Heart right ventricle (tissue), 16 donors: ENCODE measurements at regions of chr19 and their contacts with region 1.

Region 1: GRCh38 chr19:860481-861101 is 1.1 kb downstream of the CFD start:
- DNase-seq: peak in 1 of 2 donors; percentile 75
- ATAC-seq: peak; percentile 46 to 67 (median 54)
- H3K4me3 ChIP-seq: peak overlapping the region; percentile 16 to 57 (median 46)
- H3K27ac ChIP-seq: peak overlapping the region in 8 of 10 donors; percentile 34 to 86 (median 78)
- H3K4me1 ChIP-seq: peaks cover 0 to 46% (median 10%) of the 10 kb centered on the region in 9 donors
- H3K27me3 ChIP-seq: peaks cover 0 to 51% (median 37%) of the 10 kb centered on the region in 7 donors
- CTCF ChIP-seq: peak in 5 of 9 donors; percentile 19 to 43 (median 25)

Region 2: GRCh38 chr19:814258-815078 is 46.1 kb before region 1 on chr19:
- intact Hi-C with region 1: no loop called
- DNase-seq: peak in 1 of 2 donors; percentile 8
- ATAC-seq: peak in 3 of 8 donors; percentile 7 to 33 (median 10)
- H3K4me3 ChIP-seq: no peak overlapping the region
- H3K27ac ChIP-seq: no peak overlapping the region
- H3K4me1 ChIP-seq: no peaks in the 10 kb centered on the region
- H3K27me3 ChIP-seq: no peaks in the 10 kb centered on the region
- CTCF ChIP-seq: no peak

Region 3: GRCh38 chr19:913080-913748 is 52.6 kb after region 1 on chr19 and contains the start of gene R3HDM4:
- intact Hi-C with region 1: loop called in 6 of 10 experiments (anchors 2 to 5 kb)
- DNase-seq: peak; percentile 82 to 85
- ATAC-seq: peak; percentile 88 to 95 (median 92)
- H3K4me3 ChIP-seq: peak within 1 kb of the TSS; percentile 70 to 99 (median 88)
- H3K27ac ChIP-seq: peak within 1 kb of the TSS; percentile 70 to 99 (median 92)
- H3K4me1 ChIP-seq: peaks cover 13 to 59% (median 22%) of the 10 kb centered on the region in 9 donors
- H3K27me3 ChIP-seq: peaks cover 11 to 24% (median 22%) of the 10 kb centered on the region in 7 donors
- CTCF ChIP-seq: no peak
- total RNA-seq, gene R3HDM4: 16.3 to 30.6 (median 19.9) TPM

Region 4: GRCh38 chr19:920051-920864 is 59.7 kb after region 1 on chr19:
- intact Hi-C with region 1: loop called in 9 of 10 experiments (anchors 2 to 5 kb)
- DNase-seq: no peak
- ATAC-seq: peak in 2 of 8 donors; percentile 1 to 4
- H3K4me3 ChIP-seq: peak overlapping the region in 7 of 10 donors; percentile 5 to 48 (median 17)
- H3K27ac ChIP-seq: peak overlapping the region in 1 of 10 donors; percentile 26
- H3K4me1 ChIP-seq: peaks cover 13 to 68% (median 40%) of the 10 kb centered on the region in 9 donors
- H3K27me3 ChIP-seq: peaks cover 30 to 57% (median 55%) of the 10 kb centered on the region in 7 donors
- CTCF ChIP-seq: no peak

Region 5: DNA sequence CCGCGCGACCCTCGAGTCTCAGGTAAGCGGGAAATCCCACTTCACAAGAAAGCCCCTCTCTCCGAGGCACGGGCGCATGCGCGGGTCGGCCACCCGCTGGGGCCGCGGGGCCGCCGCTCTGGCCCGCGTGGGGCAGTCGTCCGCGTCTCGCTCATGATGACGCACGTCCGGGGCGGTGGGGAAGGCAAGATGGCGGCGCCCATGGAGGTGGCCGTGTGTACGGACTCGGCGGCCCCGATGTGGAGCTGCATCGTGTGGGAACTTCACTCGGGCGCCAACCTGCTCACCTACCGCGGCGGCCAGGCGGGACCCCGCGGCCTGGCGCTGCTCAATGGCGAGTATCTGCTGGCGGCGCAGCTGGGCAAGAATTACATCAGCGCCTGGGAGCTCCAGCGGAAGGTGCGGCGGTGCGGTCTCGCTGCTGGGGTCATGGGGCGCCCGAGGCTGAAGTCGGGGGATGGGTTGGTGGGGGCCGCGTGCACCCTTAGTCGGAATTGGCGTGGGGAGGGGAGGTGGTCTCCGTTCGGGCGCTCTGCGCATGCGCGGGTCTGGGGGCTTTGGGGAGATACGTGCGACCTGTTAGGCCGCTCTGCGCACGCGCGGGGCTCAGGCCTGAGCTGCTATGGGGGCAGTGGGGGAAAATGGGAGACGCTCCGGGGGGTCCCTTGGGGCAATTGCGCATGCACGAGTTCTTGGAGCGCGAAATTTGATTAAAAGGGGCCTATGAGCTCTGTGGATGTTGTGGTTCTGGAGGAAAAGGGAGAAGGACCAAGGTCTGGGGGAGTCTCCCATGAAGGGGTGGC is 123.8 kb after region 1 on chr19 and contains the start of gene WDR18:
- intact Hi-C with region 1: loop called in 5 of 10 experiments (anchors 5 to 10 kb)
- DNase-seq: peak; percentile 94 to 95
- ATAC-seq: peak; percentile 92 to 97 (median 96)
- H3K4me3 ChIP-seq: peak within 1 kb of the TSS; percentile 49 to 99 (median 94)
- H3K27ac ChIP-seq: peak within 1 kb of the TSS in 9 of 10 donors; percentile 77 to 92 (median 87)
- H3K4me1 ChIP-seq: peaks cover 4 to 36% (median 22%) of the 10 kb centered on the region in 9 donors
- H3K27me3 ChIP-seq: no peaks in the 10 kb centered on the region
- CTCF ChIP-seq: peak in 6 of 9 donors; percentile 14 to 48 (median 35)
- total RNA-seq, gene WDR18: 17.3 to 25.0 (median 20.3) TPM